ENCODE measurements at regions of chr16 and their contacts with region 1.

Region 1: GRCh38 chr16:88407807-88408206 is 25.0 kb downstream of the ZNF469 start:
- DNase-seq: no peak
- H3K4me3 ChIP-seq: no peak overlapping the region
- H3K27ac ChIP-seq: no peak overlapping the region
- H3K4me1 ChIP-seq: no peaks in the 10 kb centered on the region
- H3K27me3 ChIP-seq: no peaks in the 10 kb centered on the region
- CTCF ChIP-seq: no peak

Region 2: DNA sequence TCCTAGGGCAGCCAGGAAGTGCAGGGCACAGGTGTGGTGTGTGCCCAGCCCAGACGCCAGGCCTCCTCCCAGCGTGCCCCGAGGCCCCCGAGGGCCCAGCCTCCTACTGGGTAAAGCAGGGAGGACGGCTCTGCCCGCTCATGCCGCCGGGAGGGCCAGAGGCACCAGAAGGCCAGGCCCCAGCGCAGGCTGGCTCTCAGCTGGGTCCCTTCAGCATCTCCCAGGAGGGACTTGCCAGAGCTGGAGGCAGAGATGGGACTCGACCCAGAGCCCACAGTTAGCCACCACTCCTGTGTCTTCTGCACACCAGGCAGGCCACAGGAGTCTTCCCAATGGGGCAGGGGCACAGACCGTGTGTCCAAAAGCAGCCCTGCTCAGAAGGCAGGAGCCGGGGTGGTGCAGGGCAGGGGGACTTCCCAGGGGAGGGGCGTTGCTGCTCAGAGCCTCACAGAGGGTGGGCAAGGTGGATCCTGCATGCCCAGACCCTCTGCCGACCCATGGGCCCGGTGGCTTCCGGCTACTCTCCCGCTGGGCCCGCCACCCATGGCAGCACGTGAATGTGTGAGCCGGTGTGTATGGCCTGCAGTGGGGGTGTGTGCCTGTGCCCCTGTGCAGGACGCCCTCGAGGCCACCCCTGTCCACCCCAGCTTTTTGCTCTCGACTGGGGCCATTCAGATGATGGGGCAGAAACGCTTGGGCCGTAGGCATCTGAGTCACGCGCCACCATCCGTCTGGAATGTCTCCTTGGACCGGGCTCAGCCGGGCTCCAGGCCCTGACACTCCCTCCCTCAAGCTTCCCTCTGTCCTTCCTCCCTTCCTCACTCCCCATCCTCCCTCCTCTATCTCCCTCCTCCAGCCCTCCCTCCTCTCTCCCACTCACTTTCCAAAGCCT is 30.7 kb before region 1 on chr16:
- CTCF ChIA-PET with region 1: no interaction called
- POLR2A ChIA-PET with region 1: no interaction called
- intact Hi-C with region 1: no loop called
- DNase-seq: peak in 1 of 2 experiments; percentile 44
- H3K4me3 ChIP-seq: no peak overlapping the region
- H3K27ac ChIP-seq: no peak overlapping the region
- H3K4me1 ChIP-seq: no peaks in the 10 kb centered on the region
- H3K27me3 ChIP-seq: no peaks in the 10 kb centered on the region
- CTCF ChIP-seq: no peak

Region 3: GRCh38 chr16:89013692-89014402 is 606.0 kb after region 1 on chr16:
- CTCF ChIA-PET with region 1: interaction called, 13 read pairs
- POLR2A ChIA-PET with region 1: no interaction called
- intact Hi-C with region 1: no loop called
- DNase-seq: no peak
- H3K4me3 ChIP-seq: no peak overlapping the region
- H3K27ac ChIP-seq: no peak overlapping the region
- H3K4me1 ChIP-seq: no peaks in the 10 kb centered on the region
- H3K27me3 ChIP-seq: peaks cover 56% of the 10 kb centered on the region
- CTCF ChIP-seq: no peak